GM10248 (cell line): ENCODE measurements at regions of chr10 and their contacts with region 1.

Region 1: DNA sequence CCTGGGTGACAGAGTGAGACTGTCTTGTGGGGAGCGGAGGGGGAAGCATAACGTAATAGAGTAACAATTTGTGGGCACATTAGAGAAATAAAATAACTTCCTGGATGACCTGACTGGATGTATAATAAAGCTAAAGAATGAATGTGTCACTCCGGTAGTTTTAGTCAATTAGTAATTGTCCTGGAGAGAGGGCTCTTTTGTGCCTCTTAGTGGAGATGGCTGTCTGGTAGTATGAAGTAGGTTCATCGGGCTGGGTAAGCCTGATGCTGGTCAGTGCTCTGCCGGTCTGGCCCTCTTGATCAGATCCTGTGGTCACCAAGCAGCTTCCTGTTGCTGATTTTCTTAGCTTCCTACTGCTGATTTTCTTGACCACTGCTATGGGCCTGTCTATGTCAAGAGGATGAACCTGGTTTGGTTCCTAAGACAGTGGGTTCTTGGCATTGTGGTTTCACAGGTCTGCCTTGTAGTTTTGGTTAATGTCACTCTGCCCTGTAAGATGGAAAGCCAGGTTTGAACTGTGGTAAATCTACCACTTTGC is 34.1 kb downstream of the ZRANB1 start:
- DNase-seq: no peak
- CTCF ChIP-seq: no peak

Region 2: GRCh38 chr10:124957409-124957947 is 18.6 kb before region 1 on chr10:
- CTCF ChIA-PET with region 1: interaction called, 20 read pairs
- POLR2A ChIA-PET with region 1: interaction called, 3 read pairs
- DNase-seq: no peak
- CTCF ChIP-seq: no peak

Region 3: GRCh38 chr10:124992462-124993344 is 16.7 kb after region 1 on chr10:
- CTCF ChIA-PET with region 1: interaction called, 24 read pairs
- POLR2A ChIA-PET with region 1: no interaction called
- DNase-seq: peak; percentile 30
- CTCF ChIP-seq: peak; percentile 44